ENCODE measurements at regions of chr15 and their contacts with region 1.

Region 1: GRCh38 chr15:68431792-68432401 is at the start of gene ITGA11:
- DNase-seq: peak; percentile 87 to 93
- ATAC-seq: peak; percentile 84
- H3K4me3 ChIP-seq: peak within 1 kb of the TSS; percentile 67 to 92
- H3K27ac ChIP-seq: peak within 1 kb of the TSS; percentile 34 to 78
- H3K4me1 ChIP-seq: peaks cover 5 to 6% of the 10 kb centered on the region in 2 donors
- H3K27me3 ChIP-seq: no peaks in the 10 kb centered on the region
- total RNA-seq, gene ITGA11: 138 to 154 TPM

Region 2: DNA sequence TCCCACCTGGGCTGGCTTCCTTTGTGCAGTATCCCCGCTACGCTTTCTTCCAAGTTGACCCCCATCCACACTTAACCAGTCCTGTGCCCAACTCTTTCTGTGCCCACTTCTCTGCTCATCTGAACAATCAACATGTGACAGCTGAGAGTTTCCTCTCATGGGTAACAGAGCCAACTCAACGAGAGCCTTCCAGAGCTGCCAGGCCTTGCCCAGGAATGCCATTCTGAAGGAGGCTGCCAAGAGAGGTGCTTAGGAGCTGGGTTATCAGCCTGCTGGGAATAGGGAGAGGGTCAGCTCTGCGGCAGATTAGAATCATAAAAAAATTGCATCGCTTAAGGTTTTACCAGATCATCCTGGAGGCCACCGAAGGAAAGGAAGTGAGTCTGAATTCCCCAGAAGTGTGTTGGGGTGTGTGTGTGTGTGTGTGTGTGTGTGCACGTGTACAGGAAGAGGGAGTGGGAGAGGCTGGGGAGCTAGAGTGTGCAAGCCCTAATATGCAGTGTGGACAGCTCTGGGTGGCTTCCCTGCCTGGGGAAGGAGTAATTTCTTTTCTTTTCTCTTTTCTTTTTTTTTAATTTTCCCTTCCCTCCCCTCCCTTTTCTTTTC is 66.7 kb before region 1 on chr15:
- intact Hi-C with region 1: loop called in 1 of 2 experiments (anchors 5 kb)
- DNase-seq: no peak
- ATAC-seq: peak; percentile 59
- H3K4me3 ChIP-seq: no peak overlapping the region
- H3K27ac ChIP-seq: peak overlapping the region; percentile 93 to 99
- H3K4me1 ChIP-seq: peaks cover 0 to 10% of the 10 kb centered on the region in 2 donors
- H3K27me3 ChIP-seq: no peaks in the 10 kb centered on the region

Region 3: DNA sequence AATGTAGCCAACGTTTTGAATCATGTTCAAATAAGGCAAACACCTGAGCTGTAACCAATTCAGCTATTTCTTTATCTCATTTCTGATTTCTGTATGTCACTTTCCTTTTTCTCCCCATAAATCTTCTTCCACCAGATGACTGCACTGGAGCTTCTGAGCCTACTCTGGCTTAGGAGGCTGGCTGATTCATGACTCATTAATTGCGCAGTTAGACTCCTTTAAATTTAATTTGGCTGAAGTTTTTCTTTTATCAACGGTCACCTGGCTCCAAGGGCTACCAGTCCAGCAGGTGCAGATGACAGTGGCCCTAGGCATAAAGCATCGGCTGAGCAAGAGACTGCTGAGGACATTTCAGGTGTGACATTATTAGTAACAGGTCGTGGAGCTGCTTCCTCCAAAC is 39.6 kb after region 1 on chr15:
- intact Hi-C with region 1: no loop called
- DNase-seq: no peak
- ATAC-seq: no peak
- H3K4me3 ChIP-seq: no peak overlapping the region
- H3K27ac ChIP-seq: no peak overlapping the region
- H3K4me1 ChIP-seq: peaks cover 0 to 2% of the 10 kb centered on the region in 2 donors
- H3K27me3 ChIP-seq: no peaks in the 10 kb centered on the region

Region 4: DNA sequence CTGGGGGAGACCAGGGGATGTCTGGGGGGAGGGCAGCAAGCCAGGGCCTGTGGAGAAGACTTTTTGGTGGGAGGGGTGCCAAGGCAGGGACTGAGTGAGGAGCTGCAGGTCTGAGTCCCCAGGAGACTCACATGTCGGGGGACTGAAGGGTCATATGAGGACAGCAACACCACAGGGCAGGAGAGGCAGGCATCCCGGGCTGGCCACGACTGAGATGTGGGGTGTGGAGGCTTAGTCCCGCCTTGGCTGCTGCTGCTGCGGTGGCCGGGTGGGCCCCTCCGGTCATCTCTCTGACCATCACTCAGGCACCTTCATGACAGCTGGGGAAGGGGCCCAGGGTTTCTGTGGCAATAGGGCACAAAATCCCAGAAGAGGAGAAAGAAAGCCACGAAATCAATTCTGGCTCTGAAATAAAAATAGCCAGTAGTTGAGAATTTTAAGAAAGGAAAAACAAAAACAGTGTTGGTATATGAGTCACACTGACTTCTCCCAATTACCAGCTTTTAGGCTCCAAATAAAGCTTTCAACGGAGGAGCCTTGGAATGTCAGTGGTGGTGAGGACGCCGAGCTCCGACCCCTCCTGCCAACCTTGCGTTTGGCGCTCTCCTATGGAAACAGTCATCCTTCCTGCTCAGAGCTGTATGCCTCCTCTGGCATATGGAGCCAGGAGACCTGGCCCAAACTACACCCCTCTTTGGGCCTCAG is 53.0 kb after region 1 on chr15:
- intact Hi-C with region 1: loop called (anchors 5 kb)
- DNase-seq: peak; percentile 80 to 84
- ATAC-seq: peak; percentile 80
- H3K4me3 ChIP-seq: no peak overlapping the region
- H3K27ac ChIP-seq: peak overlapping the region; percentile 95 to 99
- H3K4me1 ChIP-seq: peaks cover 12 to 13% of the 10 kb centered on the region in 2 donors
- H3K27me3 ChIP-seq: no peaks in the 10 kb centered on the region

Region 5: DNA sequence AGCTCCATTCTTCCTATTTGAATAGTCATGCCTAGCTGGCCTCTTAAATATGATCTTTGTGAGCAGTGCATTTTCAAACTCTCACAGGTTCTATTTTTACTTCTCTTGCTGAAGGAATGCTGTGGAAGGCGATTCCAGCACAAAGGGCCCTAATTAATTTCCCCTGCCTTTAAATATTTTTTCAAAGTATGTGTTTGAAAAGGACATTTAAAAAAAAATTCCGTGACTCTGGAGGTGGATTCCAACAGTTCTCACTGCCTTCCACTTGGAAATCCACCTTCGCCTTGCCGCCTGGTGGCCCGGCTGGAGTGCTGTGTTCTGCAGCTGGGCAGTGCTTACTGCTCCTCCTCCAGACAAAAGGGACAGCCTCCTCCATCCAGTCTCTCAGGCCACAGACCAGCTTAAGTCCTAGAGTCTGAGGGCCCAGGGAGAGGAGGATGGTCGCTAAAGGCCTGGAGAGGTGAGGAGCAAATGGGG is 85.4 kb after region 1 on chr15:
- intact Hi-C with region 1: loop called in 1 of 2 experiments (anchors 10 kb)
- DNase-seq: peak; percentile 74 to 87
- ATAC-seq: peak; percentile 80
- H3K4me3 ChIP-seq: no peak overlapping the region
- H3K27ac ChIP-seq: peak overlapping the region; percentile 92 to 98
- H3K4me1 ChIP-seq: peaks cover 3 to 11% of the 10 kb centered on the region in 2 donors
- H3K27me3 ChIP-seq: no peaks in the 10 kb centered on the region

Region 6: GRCh38 chr15:68543165-68544008 is 111.5 kb after region 1 on chr15:
- intact Hi-C with region 1: loop called in 1 of 2 experiments (anchors 5 kb)
- DNase-seq: peak; percentile 73
- ATAC-seq: peak; percentile 89
- H3K4me3 ChIP-seq: no peak overlapping the region
- H3K27ac ChIP-seq: peak overlapping the region in 1 of 2 donors; percentile 52
- H3K4me1 ChIP-seq: peaks cover 3 to 5% of the 10 kb centered on the region in 2 donors
- H3K27me3 ChIP-seq: no peaks in the 10 kb centered on the region

Region 7: GRCh38 chr15:69794645-69795461 is 1363.0 kb after region 1 on chr15:
- intact Hi-C with region 1: no loop called
- DNase-seq: peak; percentile 68 to 84
- ATAC-seq: peak; percentile 79
- H3K4me3 ChIP-seq: no peak overlapping the region
- H3K27ac ChIP-seq: peak overlapping the region; percentile 98 to 100
- H3K4me1 ChIP-seq: no peaks in the 10 kb centered on the region
- H3K27me3 ChIP-seq: no peaks in the 10 kb centered on the region